B cell (primary cell): ENCODE measurements at regions of chr1 and their contacts with region 1.

Region 1: GRCh38 chr1:152001391-152002249 is 8.0 kb upstream of the S100A10 start:
- DNase-seq: peak; percentile 80
- ATAC-seq: peak; percentile 63
- H3K4me3 ChIP-seq: no peak overlapping the region
- H3K4me3 Mint-ChIP-seq: no peak overlapping the region
- H3K27ac ChIP-seq: no peak overlapping the region
- H3K27ac Mint-ChIP-seq: no peak overlapping the region
- H3K4me1 ChIP-seq: peaks cover 0 to under 1% of the 10 kb centered on the region in 2 donors
- H3K4me1 Mint-ChIP-seq: no peaks in the 10 kb centered on the region
- H3K27me3 ChIP-seq: peaks cover 0 to 31% (median 2%) of the 10 kb centered on the region in 4 experiments
- H3K27me3 Mint-ChIP-seq: peaks cover 38% of the 10 kb centered on the region
- CTCF ChIP-seq: peak; percentile 97

Region 2: DNA sequence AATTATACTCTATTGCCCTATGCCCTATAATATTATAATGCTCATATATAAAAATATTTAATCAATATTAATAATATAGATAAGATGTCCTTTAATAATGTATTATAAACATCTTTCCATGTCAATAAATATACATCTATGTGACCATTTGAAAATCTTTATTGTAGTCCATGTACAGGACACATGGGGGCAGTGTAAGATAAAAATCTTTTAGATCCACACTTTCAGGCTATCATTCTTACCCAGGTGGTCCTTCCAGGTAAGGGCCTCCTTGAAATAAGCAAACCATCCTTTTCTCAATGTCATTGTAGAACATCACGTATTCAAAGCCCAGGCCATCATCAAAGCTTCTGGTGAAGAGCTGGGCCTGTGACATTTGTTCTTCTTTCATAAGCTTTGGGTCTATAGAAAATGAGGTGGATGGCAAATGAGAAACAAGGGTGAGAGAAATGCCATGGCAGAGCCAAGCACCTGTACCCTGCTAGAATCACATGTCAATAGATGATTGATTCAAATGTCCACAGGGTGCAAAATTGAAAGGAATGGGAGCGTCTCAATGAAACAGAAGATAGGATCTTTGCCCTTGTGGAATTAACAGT is 112.5 kb before region 1 on chr1:
- CTCF ChIA-PET with region 1: interaction called, 115 read pairs
- POLR2A ChIA-PET with region 1: no interaction called
- intact Hi-C with region 1: loop called (anchors 1 kb)
- DNase-seq: peak; percentile 48
- ATAC-seq: no peak
- H3K4me3 ChIP-seq: no peak overlapping the region
- H3K4me3 Mint-ChIP-seq: no peak overlapping the region
- H3K27ac ChIP-seq: no peak overlapping the region
- H3K27ac Mint-ChIP-seq: no peak overlapping the region
- H3K4me1 ChIP-seq: peaks cover 6 to 8% of the 10 kb centered on the region in 2 donors
- H3K4me1 Mint-ChIP-seq: peaks cover 7% of the 10 kb centered on the region
- H3K27me3 ChIP-seq: no peaks in the 10 kb centered on the region
- H3K27me3 Mint-ChIP-seq: no peaks in the 10 kb centered on the region
- CTCF ChIP-seq: peak; percentile 68

Region 3: GRCh38 chr1:151934048-151934493 is 67.5 kb before region 1 on chr1:
- CTCF ChIA-PET with region 1: interaction called, 341 read pairs
- POLR2A ChIA-PET with region 1: interaction called, 3 read pairs
- intact Hi-C with region 1: loop called (anchors 1 kb)
- DNase-seq: peak; percentile 78
- ATAC-seq: peak; percentile 76
- H3K4me3 ChIP-seq: no peak overlapping the region
- H3K4me3 Mint-ChIP-seq: no peak overlapping the region
- H3K27ac ChIP-seq: no peak overlapping the region
- H3K27ac Mint-ChIP-seq: no peak overlapping the region
- H3K4me1 ChIP-seq: peaks cover 0 to 2% of the 10 kb centered on the region in 2 donors
- H3K4me1 Mint-ChIP-seq: peaks cover 10% of the 10 kb centered on the region
- H3K27me3 ChIP-seq: peaks cover 0 to 3% (median 0%) of the 10 kb centered on the region in 4 experiments
- H3K27me3 Mint-ChIP-seq: peaks cover 12% of the 10 kb centered on the region
- CTCF ChIP-seq: peak; percentile 87

Region 4: DNA sequence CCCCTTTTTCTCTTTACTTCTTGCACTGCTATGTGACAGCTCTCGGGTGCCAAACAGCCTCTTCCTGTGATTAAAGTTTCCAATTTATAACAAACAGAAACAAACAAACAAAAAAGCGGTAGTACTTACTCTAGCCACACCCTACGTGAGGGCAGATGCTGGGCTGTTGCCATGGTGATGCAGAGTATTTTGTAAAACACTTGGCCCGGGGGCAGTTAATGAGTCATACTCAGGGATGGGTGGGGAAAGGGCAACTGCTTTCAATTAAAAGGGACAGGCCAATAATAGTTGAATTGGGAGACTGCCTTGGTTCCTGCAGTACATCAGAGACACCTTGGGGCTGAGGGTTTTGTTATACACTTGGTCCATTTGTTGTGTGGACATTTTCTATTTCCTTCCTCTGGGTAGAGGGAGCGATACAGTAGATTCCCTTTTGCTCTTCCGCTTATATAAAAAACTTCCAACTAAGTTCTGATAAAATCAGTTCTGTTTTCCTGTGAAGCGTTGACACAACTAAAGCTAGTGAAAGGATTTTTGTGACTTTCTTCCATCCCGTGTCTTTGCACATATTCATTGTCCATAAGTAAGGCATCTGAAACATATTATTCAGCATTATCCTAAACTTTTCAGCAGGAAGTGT is 55.8 kb before region 1 on chr1:
- CTCF ChIA-PET with region 1: interaction called, 17 read pairs
- POLR2A ChIA-PET with region 1: no interaction called
- intact Hi-C with region 1: no loop called
- DNase-seq: peak; percentile 90
- ATAC-seq: peak; percentile 72
- H3K4me3 ChIP-seq: no peak overlapping the region
- H3K4me3 Mint-ChIP-seq: peak overlapping the region; percentile 71
- H3K27ac ChIP-seq: peak overlapping the region; percentile 84 to 88
- H3K27ac Mint-ChIP-seq: peak overlapping the region; percentile 93
- H3K4me1 ChIP-seq: peaks cover 31 to 38% of the 10 kb centered on the region in 2 donors
- H3K4me1 Mint-ChIP-seq: peaks cover 43% of the 10 kb centered on the region
- H3K27me3 ChIP-seq: no peaks in the 10 kb centered on the region
- H3K27me3 Mint-ChIP-seq: peaks cover 4% of the 10 kb centered on the region
- CTCF ChIP-seq: no peak

Region 5: DNA sequence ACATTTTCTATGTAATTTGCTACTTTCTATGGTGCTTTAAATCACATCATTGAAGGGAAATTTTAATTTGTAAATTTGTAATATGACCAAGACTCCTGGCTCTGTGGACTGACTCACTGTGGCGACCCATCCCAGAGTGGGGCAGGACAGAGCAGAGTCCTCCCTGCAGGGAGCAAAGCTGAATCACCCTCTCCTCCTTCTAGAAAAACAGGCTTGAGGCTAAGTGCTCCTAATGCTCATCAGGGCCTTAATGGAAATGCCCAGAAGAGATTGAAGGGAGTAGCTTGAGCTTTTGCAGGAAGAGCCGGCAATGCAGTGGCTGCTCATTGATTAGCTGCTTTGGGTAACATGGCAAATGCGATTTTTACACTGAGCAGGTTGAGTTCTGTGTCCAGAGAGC is 24.8 kb before region 1 on chr1:
- CTCF ChIA-PET with region 1: interaction called, 307 read pairs
- POLR2A ChIA-PET with region 1: no interaction called
- intact Hi-C with region 1: no loop called
- DNase-seq: no peak
- ATAC-seq: no peak
- H3K4me3 ChIP-seq: no peak overlapping the region
- H3K4me3 Mint-ChIP-seq: no peak overlapping the region
- H3K27ac ChIP-seq: no peak overlapping the region
- H3K27ac Mint-ChIP-seq: no peak overlapping the region
- H3K4me1 ChIP-seq: no peaks in the 10 kb centered on the region
- H3K4me1 Mint-ChIP-seq: no peaks in the 10 kb centered on the region
- H3K27me3 ChIP-seq: no peaks in the 10 kb centered on the region
- H3K27me3 Mint-ChIP-seq: peaks cover 17% of the 10 kb centered on the region
- CTCF ChIP-seq: no peak

Region 6: GRCh38 chr1:152034646-152035405 is 33.2 kb after region 1 on chr1:
- CTCF ChIA-PET with region 1: interaction called, 13 read pairs
- POLR2A ChIA-PET with region 1: no interaction called
- intact Hi-C with region 1: no loop called
- DNase-seq: peak; percentile 73
- ATAC-seq: peak; percentile 48
- H3K4me3 ChIP-seq: peak overlapping the region in 4 of 5 experiments; percentile 14 to 88 (median 66)
- H3K4me3 Mint-ChIP-seq: peak overlapping the region; percentile 90
- H3K27ac ChIP-seq: peak overlapping the region; percentile 34 to 80
- H3K27ac Mint-ChIP-seq: peak overlapping the region; percentile 94
- H3K4me1 ChIP-seq: peaks cover 30 to 38% of the 10 kb centered on the region in 2 donors
- H3K4me1 Mint-ChIP-seq: peaks cover 38% of the 10 kb centered on the region
- H3K27me3 ChIP-seq: no peaks in the 10 kb centered on the region
- H3K27me3 Mint-ChIP-seq: no peaks in the 10 kb centered on the region
- CTCF ChIP-seq: peak; percentile 83

Region 7: GRCh38 chr1:152089014-152089676 is 87.5 kb after region 1 on chr1 and contains the start of gene TCHHL1:
- CTCF ChIA-PET with region 1: no interaction called
- POLR2A ChIA-PET with region 1: no interaction called
- intact Hi-C with region 1: no loop called
- DNase-seq: no peak
- ATAC-seq: no peak
- H3K4me3 ChIP-seq: no peak within 1 kb of the TSS
- H3K4me3 Mint-ChIP-seq: no peak within 1 kb of the TSS
- H3K27ac ChIP-seq: no peak within 1 kb of the TSS
- H3K27ac Mint-ChIP-seq: no peak within 1 kb of the TSS
- H3K4me1 ChIP-seq: no peaks in the 10 kb centered on the region
- H3K4me1 Mint-ChIP-seq: no peaks in the 10 kb centered on the region
- H3K27me3 ChIP-seq: peaks cover 0 to 34% (median 11%) of the 10 kb centered on the region in 4 experiments
- H3K27me3 Mint-ChIP-seq: peaks cover 31% of the 10 kb centered on the region
- CTCF ChIP-seq: no peak
- total RNA-seq, gene TCHHL1: not detected in 2 replicates